Mammary epithelial cell (primary cell): ENCODE measurements at regions of chr12 and their contacts with region 1.

Region 1: DNA sequence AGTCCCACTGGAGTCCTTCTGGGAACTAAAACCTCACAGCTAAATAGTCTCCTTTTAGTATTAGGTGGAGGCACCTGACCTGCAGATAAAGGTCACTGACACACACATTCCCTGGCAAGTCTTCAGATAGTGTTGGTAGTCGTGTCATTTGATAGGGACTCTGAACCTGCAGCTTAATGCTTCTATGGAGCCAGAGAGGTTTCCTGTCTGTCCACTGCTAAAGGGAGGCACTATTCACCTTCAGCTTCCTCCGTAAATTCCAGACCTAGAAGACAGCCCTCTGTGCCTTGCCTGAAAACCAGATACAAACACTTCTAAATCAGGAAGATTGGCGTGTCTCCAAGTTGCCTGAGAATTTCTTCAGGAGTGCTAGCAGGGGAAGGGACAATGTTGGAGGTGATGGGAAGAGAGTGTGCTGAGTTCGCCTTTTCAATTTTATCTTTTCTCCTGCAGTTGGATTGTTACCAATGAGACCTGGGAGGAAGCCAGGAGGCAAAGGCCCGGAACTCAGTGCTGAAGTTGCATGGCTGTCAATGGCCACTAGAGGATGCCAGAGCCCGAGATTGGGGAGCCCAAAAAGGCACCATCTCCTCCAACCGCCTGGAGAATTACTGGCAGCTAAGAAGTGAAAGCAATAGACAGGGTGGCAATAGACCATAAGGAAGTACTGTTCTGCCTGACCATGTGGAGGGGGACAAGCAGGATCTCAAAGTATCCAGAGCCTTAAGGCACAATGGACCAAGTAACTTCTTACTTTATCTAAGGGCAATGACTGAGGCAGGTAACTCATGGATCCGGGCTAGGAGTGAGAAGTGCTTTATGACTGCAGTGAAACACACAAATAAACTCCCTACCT is 81.6 kb upstream of the SCAF11 start:
- DNase-seq: peak; percentile 70
- H3K4me3 ChIP-seq: no peak overlapping the region
- H3K27ac ChIP-seq: peak overlapping the region; percentile 15
- H3K4me1 ChIP-seq: peaks cover 24% of the 10 kb centered on the region
- H3K27me3 ChIP-seq: no peaks in the 10 kb centered on the region
- CTCF ChIP-seq: peak; percentile 100

Region 2: DNA sequence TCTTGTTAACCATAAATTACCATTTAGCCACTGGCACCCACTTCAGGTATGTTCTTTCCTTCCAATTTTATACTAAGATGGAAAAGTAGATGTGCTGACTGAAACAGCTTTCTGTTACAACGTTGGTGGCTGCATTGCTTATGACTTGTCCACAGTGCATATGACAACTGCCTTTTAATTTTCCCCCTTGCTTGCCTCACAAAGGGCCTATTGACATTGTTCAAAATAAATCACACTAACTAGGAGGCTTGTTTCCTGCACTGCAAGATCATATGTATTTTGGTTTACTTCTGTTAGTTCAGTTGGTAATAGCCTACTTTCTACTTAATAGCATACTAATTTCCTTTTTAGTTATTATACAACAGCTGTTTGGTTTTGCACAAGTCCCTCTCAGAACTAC is 137.0 kb before region 1 on chr12:
- CTCF ChIA-PET with region 1: no interaction called
- dilution Hi-C with region 1: no loop called
- in situ Hi-C with region 1: no loop called
- intact Hi-C with region 1: no loop called
- DNase-seq: no peak
- H3K4me3 ChIP-seq: no peak overlapping the region
- H3K27ac ChIP-seq: no peak overlapping the region
- H3K4me1 ChIP-seq: no peaks in the 10 kb centered on the region
- H3K27me3 ChIP-seq: no peaks in the 10 kb centered on the region
- CTCF ChIP-seq: no peak

Region 3: GRCh38 chr12:46110928-46111699 is 39.1 kb after region 1 on chr12:
- CTCF ChIA-PET with region 1: no interaction called
- dilution Hi-C with region 1: no loop called
- in situ Hi-C with region 1: no loop called
- intact Hi-C with region 1: loop called (anchors 1 kb)
- DNase-seq: peak; percentile 64
- H3K4me3 ChIP-seq: no peak overlapping the region
- H3K27ac ChIP-seq: no peak overlapping the region
- H3K4me1 ChIP-seq: peaks cover 27% of the 10 kb centered on the region
- H3K27me3 ChIP-seq: no peaks in the 10 kb centered on the region
- CTCF ChIP-seq: peak in 1 of 2 donors; percentile 21

Region 4: GRCh38 chr12:46153268-46153872 is 81.4 kb after region 1 on chr12:
- CTCF ChIA-PET with region 1: no interaction called
- dilution Hi-C with region 1: no loop called
- in situ Hi-C with region 1: no loop called
- intact Hi-C with region 1: loop called (anchors 1 kb)
- DNase-seq: no peak
- H3K4me3 ChIP-seq: peak overlapping the region in 1 of 3 experiments; percentile 17
- H3K27ac ChIP-seq: no peak overlapping the region
- H3K4me1 ChIP-seq: peaks cover 11% of the 10 kb centered on the region
- H3K27me3 ChIP-seq: no peaks in the 10 kb centered on the region
- CTCF ChIP-seq: peak; percentile 67 to 77

Region 5: GRCh38 chr12:46187023-46187422 is 115.0 kb after region 1 on chr12:
- CTCF ChIA-PET with region 1: no interaction called
- dilution Hi-C with region 1: no loop called
- in situ Hi-C with region 1: no loop called
- intact Hi-C with region 1: loop called (anchors 5 kb)
- DNase-seq: peak; percentile 72
- H3K4me3 ChIP-seq: no peak overlapping the region
- H3K27ac ChIP-seq: no peak overlapping the region
- H3K4me1 ChIP-seq: peaks cover 10% of the 10 kb centered on the region
- H3K27me3 ChIP-seq: no peaks in the 10 kb centered on the region
- CTCF ChIP-seq: no peak

Region 6: DNA sequence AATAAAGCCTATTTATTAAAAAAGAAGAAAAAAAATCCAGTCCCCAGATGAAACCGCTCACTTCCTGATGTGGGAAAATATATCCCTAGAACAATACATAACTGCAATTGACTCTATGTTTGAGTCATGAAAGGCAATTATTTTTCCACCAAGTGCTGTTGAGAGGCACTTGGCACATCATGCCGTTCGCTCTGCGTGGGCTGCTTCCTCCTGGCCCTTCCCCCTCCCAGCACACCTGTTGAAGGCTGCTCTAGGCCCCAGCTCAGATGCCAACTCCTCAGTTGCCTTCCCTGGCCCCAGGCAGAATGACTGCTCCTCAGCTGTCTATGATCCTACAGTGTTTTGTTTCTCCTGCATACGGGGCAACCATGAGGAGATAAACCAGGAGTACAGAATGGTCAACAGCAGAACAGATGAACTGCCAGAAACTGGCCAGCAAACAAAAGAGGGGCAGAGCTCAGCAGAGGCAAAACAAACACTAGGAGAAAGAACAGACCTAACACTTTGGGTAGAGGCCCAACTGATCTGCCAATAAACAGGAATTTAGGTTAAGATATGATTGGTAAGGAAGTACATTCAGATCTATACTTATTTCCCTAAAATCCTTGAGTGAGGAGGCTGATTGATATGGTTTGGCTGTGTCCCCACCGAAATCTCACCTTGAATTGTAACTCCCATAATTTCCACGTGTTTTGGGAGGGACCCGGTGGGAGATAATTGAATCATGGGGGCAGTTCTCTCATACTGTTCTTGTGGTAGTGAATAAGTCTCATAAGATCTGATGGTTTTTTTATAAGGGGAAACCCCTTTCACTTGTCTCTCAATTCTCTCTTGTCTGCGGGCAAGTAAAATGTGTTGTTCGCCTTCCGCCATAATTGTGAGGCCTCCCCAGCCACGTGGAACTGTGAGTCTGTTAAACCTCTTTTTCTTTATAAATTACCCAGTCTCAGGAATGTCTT is 138.2 kb after region 1 on chr12:
- CTCF ChIA-PET with region 1: no interaction called
- dilution Hi-C with region 1: no loop called
- in situ Hi-C with region 1: no loop called
- intact Hi-C with region 1: loop called (anchors 5 kb)
- DNase-seq: peak; percentile 96
- H3K4me3 ChIP-seq: no peak overlapping the region
- H3K27ac ChIP-seq: peak overlapping the region; percentile 87
- H3K4me1 ChIP-seq: peaks cover 28% of the 10 kb centered on the region
- H3K27me3 ChIP-seq: no peaks in the 10 kb centered on the region
- CTCF ChIP-seq: no peak

Region 7: GRCh38 chr12:46357438-46358324 is 285.7 kb after region 1 on chr12:
- CTCF ChIA-PET with region 1: no interaction called
- dilution Hi-C with region 1: no loop called
- in situ Hi-C with region 1: no loop called
- intact Hi-C with region 1: loop called (anchors 1 kb)
- DNase-seq: peak; percentile 87
- H3K4me3 ChIP-seq: no peak overlapping the region
- H3K27ac ChIP-seq: peak overlapping the region; percentile 13
- H3K4me1 ChIP-seq: peaks cover 28% of the 10 kb centered on the region
- H3K27me3 ChIP-seq: no peaks in the 10 kb centered on the region
- CTCF ChIP-seq: no peak